H1 (cell line): ENCODE measurements at regions of chr14 and their contacts with region 1.

Region 1: DNA sequence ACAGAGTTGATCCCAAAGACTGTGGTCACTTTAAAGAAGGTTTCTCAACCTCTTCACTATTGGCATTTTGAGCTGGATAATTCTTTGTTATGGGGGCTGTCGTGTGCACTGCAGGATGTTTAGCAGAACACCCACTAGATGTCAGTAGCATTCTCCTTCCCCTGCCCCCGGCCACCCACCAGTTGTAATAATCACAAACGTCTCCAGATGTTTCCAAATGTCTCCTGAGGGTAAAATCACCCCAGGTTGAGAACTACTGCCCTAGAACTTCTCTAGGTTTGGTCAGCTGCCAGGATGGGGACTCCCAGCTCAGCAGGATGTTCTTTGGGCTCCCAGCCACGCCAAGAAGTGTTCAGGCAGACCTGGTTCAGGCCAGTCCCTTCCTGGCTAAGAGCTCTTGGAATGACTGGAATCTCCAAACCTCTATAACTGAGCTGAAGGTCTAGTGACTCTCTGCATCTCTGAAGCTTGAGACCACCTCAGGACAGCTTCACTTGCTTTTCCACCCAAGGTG is 12.5 kb upstream of the AJUBA start:
- DNase-seq: no peak
- H3K4me3 ChIP-seq: no peak overlapping the region
- H3K27ac ChIP-seq: no peak overlapping the region
- H3K4me1 ChIP-seq: peaks cover 0 to 5% (median 2%) of the 10 kb centered on the region in 4 experiments; a peak in 2 of 7 replicates
- H3K27me3 ChIP-seq: no peaks in the 10 kb centered on the region
- CTCF ChIP-seq: peak; percentile 38 to 64 (median 46); a peak in 3 of 4 replicates
- EP300 ChIP-seq: no peak
- POLR2A ChIP-seq: no peak
- RAD21 ChIP-seq: peak; percentile 55 to 72

Region 2: GRCh38 chr14:22886500-22887259 is 108.1 kb before region 1 on chr14:
- CTCF ChIA-PET with region 1: no interaction called
- POLR2A ChIA-PET with region 1: no interaction called
- DNase-seq: peak in 1 of 2 experiments; percentile 87
- H3K4me3 ChIP-seq: peak overlapping the region; percentile 57 to 83 (median 65)
- H3K27ac ChIP-seq: peak overlapping the region; percentile 25
- H3K4me1 ChIP-seq: peaks cover 7 to 21% (median 12%) of the 10 kb centered on the region in 4 experiments
- H3K27me3 ChIP-seq: peaks cover 0 to 17% (median 11%) of the 10 kb centered on the region in 4 experiments; a peak in 6 of 7 replicates
- CTCF ChIP-seq: peak; percentile 17 to 35 (median 21); a peak in 3 of 4 replicates
- EP300 ChIP-seq: no peak
- POLR2A ChIP-seq: peak in 1 of 2 experiments; percentile 75; a peak in 2 of 3 replicates
- RAD21 ChIP-seq: peak in 1 of 2 experiments; percentile 6; a peak in 2 of 4 replicates

Region 3: GRCh38 chr14:22955702-22956569 is 38.9 kb before region 1 on chr14:
- CTCF ChIA-PET with region 1: interaction called, 14 read pairs
- POLR2A ChIA-PET with region 1: interaction called, 3 read pairs
- DNase-seq: no peak
- H3K4me3 ChIP-seq: peak overlapping the region; percentile 71 to 88 (median 84)
- H3K27ac ChIP-seq: 0 out of 2 replicates have a peak overlapping the region, but pooled peaks have one; percentile 89
- H3K4me1 ChIP-seq: peaks cover 2 to 4% (median 2%) of the 10 kb centered on the region in 4 experiments; a peak in 5 of 7 replicates
- H3K27me3 ChIP-seq: no peaks in the 10 kb centered on the region
- CTCF ChIP-seq: no peak
- EP300 ChIP-seq: no peak
- POLR2A ChIP-seq: no peak
- RAD21 ChIP-seq: no peak

Region 4: DNA sequence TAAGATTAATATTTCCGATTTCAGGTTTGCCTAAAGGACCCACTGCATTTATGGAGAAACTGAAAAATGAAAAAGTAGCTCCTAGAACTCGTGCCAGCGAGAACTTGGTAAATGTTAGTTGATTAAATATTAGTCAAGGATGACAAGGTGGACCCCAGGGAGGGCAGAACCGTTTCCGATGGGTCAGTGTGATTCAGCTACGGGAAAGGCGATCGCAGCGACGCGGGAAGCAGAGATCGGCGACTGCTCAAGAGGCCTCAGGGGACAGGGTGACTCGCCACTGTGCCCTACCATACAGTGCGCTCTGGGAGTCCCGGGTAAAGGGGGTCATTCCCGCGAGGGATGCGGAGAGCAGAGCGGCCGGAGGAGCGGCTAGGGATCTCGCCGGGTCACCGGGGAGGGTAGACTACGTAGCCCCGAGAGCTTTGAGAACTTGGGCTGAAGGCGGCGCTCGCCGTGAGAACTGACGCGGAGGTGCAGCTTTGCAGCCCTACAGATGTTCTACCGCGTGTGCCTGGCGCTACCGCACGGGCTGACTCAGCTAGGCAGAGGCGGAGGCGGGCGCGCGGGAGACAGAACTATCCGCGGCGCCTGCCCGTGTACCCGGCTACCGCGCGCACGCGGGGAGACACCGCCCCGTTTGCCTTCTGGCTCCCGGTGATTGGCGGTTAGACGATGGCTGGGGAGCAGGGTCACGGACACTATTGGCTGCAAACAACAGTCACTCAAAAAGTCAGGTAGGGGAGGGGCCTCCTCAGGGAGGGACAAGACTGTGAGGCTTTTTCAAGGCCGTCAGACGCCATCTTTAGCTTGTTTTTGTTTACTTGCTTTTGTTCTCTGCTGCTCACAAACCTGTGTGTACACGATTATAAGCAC is 12.0 kb after region 1 on chr14:
- CTCF ChIA-PET with region 1: interaction called, 60 read pairs
- POLR2A ChIA-PET with region 1: interaction called, 69 read pairs
- DNase-seq: peak; percentile 89 to 92
- H3K4me3 ChIP-seq: peak overlapping the region; percentile 73 to 85 (median 76)
- H3K27ac ChIP-seq: peak overlapping the region; percentile 89
- H3K4me1 ChIP-seq: peaks cover 4 to 7% (median 6%) of the 10 kb centered on the region in 4 experiments; a peak in 4 of 7 replicates
- H3K27me3 ChIP-seq: no peaks in the 10 kb centered on the region
- CTCF ChIP-seq: peak in 1 of 3 experiments; percentile 27; a peak in 2 of 4 replicates
- EP300 ChIP-seq: no peak
- POLR2A ChIP-seq: peak; percentile 74 to 99
- RAD21 ChIP-seq: no peak

Region 5: GRCh38 chr14:23025151-23025814 is 30.5 kb after region 1 on chr14:
- CTCF ChIA-PET with region 1: interaction called, 57 read pairs
- POLR2A ChIA-PET with region 1: interaction called, 8 read pairs
- DNase-seq: no peak
- H3K4me3 ChIP-seq: no peak overlapping the region
- H3K27ac ChIP-seq: no peak overlapping the region
- H3K4me1 ChIP-seq: peaks cover 0 to 3% (median under 1%) of the 10 kb centered on the region in 4 experiments; a peak in 1 of 7 replicates
- H3K27me3 ChIP-seq: no peaks in the 10 kb centered on the region
- CTCF ChIP-seq: no peak
- EP300 ChIP-seq: no peak
- POLR2A ChIP-seq: no peak
- RAD21 ChIP-seq: no peak

Region 6: GRCh38 chr14:23068476-23069412 is 73.9 kb after region 1 on chr14:
- CTCF ChIA-PET with region 1: interaction called, 785 read pairs
- POLR2A ChIA-PET with region 1: interaction called, 5 read pairs
- DNase-seq: peak; percentile 84 to 85
- H3K4me3 ChIP-seq: peak overlapping the region in 1 of 4 experiments; percentile 18; a peak in 1 of 8 replicates
- H3K27ac ChIP-seq: no peak overlapping the region
- H3K4me1 ChIP-seq: peaks cover 5 to 27% (median 15%) of the 10 kb centered on the region in 4 experiments; a peak in 6 of 7 replicates
- H3K27me3 ChIP-seq: no peaks in the 10 kb centered on the region
- CTCF ChIP-seq: peak; percentile 82 to 99 (median 99)
- EP300 ChIP-seq: no peak
- POLR2A ChIP-seq: no peak
- RAD21 ChIP-seq: peak; percentile 59 to 71

Region 7: DNA sequence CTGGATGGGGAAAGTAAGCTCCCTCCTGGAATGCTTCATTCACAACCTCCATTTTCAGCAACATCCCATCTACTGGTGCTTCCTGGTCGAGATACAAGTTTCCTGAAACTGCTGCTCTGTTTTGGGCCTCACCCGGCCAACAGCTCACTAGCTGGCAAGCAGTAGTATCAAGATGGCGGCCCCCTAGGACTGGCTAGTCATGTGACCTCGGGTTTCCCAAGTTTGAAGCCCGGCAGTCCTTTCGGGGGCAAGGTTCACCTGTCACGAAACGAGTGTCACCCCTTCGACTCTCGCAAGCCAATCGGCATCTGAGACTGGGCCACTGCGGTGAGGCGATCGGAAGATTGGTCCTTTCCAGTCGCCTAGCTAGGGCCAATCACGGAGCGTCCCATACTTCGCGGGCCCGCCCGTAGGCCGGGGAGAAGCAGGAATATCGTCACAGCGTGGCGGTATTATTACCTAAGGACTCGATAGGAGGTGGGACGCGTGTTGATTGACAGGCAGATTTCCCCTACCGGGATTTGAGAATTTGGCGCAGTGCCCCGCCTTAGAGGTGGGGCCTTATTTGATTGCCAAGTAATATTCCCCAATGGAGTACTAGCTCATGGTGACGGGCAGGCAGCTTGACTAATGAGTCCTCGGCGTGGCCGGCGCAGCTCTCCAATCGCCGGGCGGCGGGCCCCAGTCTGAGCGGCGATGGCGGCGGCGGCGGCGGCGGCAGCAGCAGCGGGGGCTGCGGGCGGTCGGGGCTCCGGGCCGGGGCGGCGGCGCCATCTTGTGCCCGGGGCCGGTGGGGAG is 326.2 kb after region 1 on chr14 and contains the start of gene PABPN1:
- CTCF ChIA-PET with region 1: no interaction called
- POLR2A ChIA-PET with region 1: no interaction called
- DNase-seq: peak; percentile 94 to 99
- H3K4me3 ChIP-seq: peak within 1 kb of the TSS; percentile 96 to 100 (median 99)
- H3K27ac ChIP-seq: peak within 1 kb of the TSS; percentile 92
- H3K4me1 ChIP-seq: peaks cover 0 to 6% (median 2%) of the 10 kb centered on the region in 4 experiments; a peak in 6 of 7 replicates
- H3K27me3 ChIP-seq: no peaks in the 10 kb centered on the region
- CTCF ChIP-seq: no peak
- EP300 ChIP-seq: no peak
- POLR2A ChIP-seq: peak; percentile 81 to 94
- RAD21 ChIP-seq: no peak
- total RNA-seq, gene PABPN1: 300 and 312 TPM in 2 replicates